ENCODE measurements at regions of chr12 and their contacts with region 1.

Region 1: GRCh38 chr12:100234598-100235304 is 32.1 kb downstream of the DEPDC4 start:
- DNase-seq: no peak
- H3K4me3 ChIP-seq: no peak overlapping the region
- H3K27ac ChIP-seq: no peak overlapping the region
- H3K4me1 ChIP-seq: peaks cover 5% of the 10 kb centered on the region
- H3K27me3 ChIP-seq: no peaks in the 10 kb centered on the region
- CTCF ChIP-seq: peak; percentile 73 to 77

Region 2: DNA sequence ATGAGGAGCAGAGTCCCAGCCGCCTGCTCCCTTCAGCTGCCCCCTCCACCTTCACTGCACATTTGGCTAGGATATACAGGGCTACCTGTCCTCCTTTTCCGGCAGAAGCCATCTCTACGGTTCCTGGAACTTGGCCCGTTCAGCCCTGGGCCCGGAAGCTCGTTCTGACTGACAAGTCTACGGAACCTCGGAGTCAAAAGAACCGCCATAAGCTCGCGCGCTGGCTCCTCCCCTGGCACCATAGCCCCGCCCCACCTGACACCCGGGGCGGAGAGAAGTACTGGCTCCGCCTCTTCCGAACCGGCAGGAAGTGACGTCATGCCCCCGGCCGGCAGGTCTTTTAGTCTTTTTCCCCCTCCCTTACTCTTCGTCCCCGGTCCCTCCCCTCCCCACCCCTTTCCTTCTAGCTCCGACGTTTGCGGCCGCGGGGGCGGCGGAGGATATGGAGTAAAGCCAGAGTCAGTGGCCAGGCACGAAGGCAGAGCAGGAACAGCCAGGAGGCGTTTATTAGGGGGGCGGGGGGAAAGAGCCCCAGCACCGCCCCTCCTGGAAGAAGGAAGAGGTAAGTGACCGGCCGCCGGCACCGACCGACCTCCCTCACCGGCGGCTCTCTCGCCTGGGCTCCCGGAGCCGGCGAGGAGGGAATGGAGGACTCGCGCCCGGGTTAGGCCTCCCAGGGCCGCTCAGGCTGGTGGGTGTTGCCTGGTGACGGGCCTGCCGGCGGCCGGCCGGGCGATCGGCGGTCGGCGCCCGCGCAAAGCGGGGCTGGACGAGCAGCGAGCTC is 32.3 kb after region 1 on chr12 and contains the starts of genes DEPDC4 and SCYL2:
- CTCF ChIA-PET with region 1: no interaction called
- dilution Hi-C with region 1: no loop called
- in situ Hi-C with region 1: no loop called
- intact Hi-C with region 1: loop called (anchors 2 kb)
- DNase-seq: peak; percentile 99
- H3K4me3 ChIP-seq: peak within 1 kb of the TSS; percentile 75 to 88 (median 84)
- H3K27ac ChIP-seq: peak within 1 kb of the TSS; percentile 94
- H3K4me1 ChIP-seq: peaks cover 12% of the 10 kb centered on the region
- H3K27me3 ChIP-seq: no peaks in the 10 kb centered on the region
- CTCF ChIP-seq: no peak
- total RNA-seq, gene DEPDC4: 0.83 to 2.4 TPM
- total RNA-seq, gene SCYL2: 56.6 to 58.7 TPM

Region 3: GRCh38 chr12:100545092-100545491 is 310.3 kb after region 1 on chr12:
- CTCF ChIA-PET with region 1: no interaction called
- dilution Hi-C with region 1: no loop called
- in situ Hi-C with region 1: loop called (anchors 10 to 25 kb)
- intact Hi-C with region 1: no loop called
- DNase-seq: peak; percentile 12
- H3K4me3 ChIP-seq: no peak overlapping the region
- H3K27ac ChIP-seq: no peak overlapping the region
- H3K4me1 ChIP-seq: no peaks in the 10 kb centered on the region
- H3K27me3 ChIP-seq: peaks cover 2% of the 10 kb centered on the region
- CTCF ChIP-seq: no peak

Region 4: DNA sequence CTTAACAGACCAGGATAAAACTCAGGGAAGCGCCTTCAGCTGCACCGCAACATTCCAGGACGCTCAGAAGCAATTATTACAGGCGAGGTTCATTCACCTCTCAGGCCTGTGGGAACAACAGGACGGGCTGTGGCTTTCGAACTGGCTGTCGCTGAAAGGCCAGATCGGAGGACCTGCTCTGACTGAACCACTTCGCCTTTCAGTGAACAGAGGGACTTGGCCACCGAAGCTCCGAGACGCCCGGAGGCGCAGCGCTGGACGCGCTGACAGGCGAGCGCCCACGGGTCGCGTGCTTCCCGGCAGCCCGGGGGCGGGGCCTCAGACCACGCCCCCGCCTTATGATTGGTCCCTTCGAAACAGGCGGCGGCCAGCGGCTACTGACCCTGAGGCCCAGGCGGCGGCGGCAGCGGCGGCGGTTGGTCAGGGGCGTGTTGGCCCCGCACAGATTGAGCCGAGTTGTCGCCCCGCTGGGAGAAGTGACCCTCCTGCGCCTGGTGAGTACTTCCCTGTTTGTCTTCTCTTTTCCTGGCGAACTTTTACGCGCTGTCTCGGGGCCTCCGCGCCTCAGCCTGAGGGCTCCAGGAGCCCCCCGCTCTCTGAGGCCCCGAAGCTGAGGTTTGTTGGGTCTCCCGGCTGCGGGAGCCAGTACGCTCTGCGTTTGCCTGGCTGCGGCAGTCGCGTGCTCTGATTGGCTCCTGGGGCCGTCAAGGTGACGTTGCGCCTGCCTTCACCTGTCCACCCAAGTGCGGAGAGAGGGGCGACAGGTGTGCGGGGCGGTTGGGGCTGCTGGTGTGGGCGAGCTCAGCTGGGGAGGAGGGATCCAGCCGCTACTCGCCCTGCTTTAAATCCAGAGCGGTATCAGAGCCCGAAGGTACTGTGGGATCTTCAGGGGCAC is 338.8 kb after region 1 on chr12 and contains the start of gene GAS2L3:
- CTCF ChIA-PET with region 1: interaction called, 5 read pairs
- dilution Hi-C with region 1: no loop called
- in situ Hi-C with region 1: loop called in 1 of 2 experiments (anchors 25 kb)
- intact Hi-C with region 1: loop called (anchors 5 kb)
- DNase-seq: peak; percentile 82
- H3K4me3 ChIP-seq: peak within 1 kb of the TSS; percentile 71 to 92 (median 74)
- H3K27ac ChIP-seq: peak within 1 kb of the TSS; percentile 82
- H3K4me1 ChIP-seq: peaks cover 10% of the 10 kb centered on the region
- H3K27me3 ChIP-seq: no peaks in the 10 kb centered on the region
- CTCF ChIP-seq: no peak
- total RNA-seq, gene GAS2L3: 4.0 to 17.7 TPM

Region 5: GRCh38 chr12:100733817-100734593 is 499.3 kb after region 1 on chr12:
- CTCF ChIA-PET with region 1: no interaction called
- dilution Hi-C with region 1: no loop called
- in situ Hi-C with region 1: no loop called
- intact Hi-C with region 1: loop called (anchors 10 kb)
- DNase-seq: peak; percentile 24
- H3K4me3 ChIP-seq: no peak overlapping the region
- H3K27ac ChIP-seq: no peak overlapping the region
- H3K4me1 ChIP-seq: no peaks in the 10 kb centered on the region
- H3K27me3 ChIP-seq: no peaks in the 10 kb centered on the region
- CTCF ChIP-seq: peak; percentile 58 to 73